Activated B cell treated with CpG ODN at 0.5 μM for 24 hours (primary cell): ENCODE measurements at regions of chrX and their contacts with region 1.

Region 1: GRCh38 chrX:10722851-10723250 is 102.5 kb upstream of the MID1 start:
- DNase-seq: no peak
- ATAC-seq: peak; percentile 61
- H3K4me3 Mint-ChIP-seq: no peak overlapping the region
- H3K27ac Mint-ChIP-seq: no peak overlapping the region
- H3K4me1 Mint-ChIP-seq: no peaks in the 10 kb centered on the region
- H3K27me3 Mint-ChIP-seq: no peaks in the 10 kb centered on the region
- CTCF ChIP-seq: no peak

Region 2: DNA sequence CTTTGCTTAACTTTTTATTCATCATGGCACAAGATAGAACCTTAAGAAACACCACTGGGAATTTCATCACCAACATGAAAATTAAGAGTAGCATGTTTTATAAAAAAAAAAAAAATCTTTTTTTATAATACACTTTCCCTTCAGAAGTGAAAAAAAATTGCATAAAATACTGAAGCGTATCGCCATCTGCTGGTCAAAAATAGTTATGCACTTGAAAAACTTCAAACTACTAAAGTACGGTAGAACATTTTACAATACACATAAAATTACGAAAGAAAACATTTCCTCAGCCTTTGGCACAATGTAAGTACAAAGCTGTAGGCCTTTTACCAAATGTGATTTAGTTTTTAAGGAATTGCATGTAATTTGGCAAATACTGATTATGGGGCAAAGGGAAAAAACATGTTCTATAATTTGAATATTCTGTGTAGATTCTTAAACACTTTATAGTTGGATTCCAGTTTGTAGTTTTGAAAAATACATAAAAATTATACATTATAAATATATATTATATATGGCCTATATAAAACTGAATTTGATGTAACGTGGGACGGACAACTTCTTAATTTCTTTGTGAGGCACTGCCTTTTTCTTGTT is 414.8 kb after region 1 on chrX:
- CTCF ChIA-PET with region 1: no interaction called
- POLR2A ChIA-PET with region 1: no interaction called
- intact Hi-C with region 1: loop called (anchors 2 kb)
- DNase-seq: no peak
- ATAC-seq: no peak
- H3K4me3 Mint-ChIP-seq: no peak overlapping the region
- H3K27ac Mint-ChIP-seq: no peak overlapping the region
- H3K4me1 Mint-ChIP-seq: no peaks in the 10 kb centered on the region
- H3K27me3 Mint-ChIP-seq: no peaks in the 10 kb centered on the region
- CTCF ChIP-seq: no peak

Region 3: GRCh38 chrX:12007881-12008280 is 1285.0 kb after region 1 on chrX:
- CTCF ChIA-PET with region 1: no interaction called
- POLR2A ChIA-PET with region 1: no interaction called
- intact Hi-C with region 1: no loop called
- DNase-seq: no peak
- ATAC-seq: no peak
- H3K4me3 Mint-ChIP-seq: no peak overlapping the region
- H3K27ac Mint-ChIP-seq: no peak overlapping the region
- H3K4me1 Mint-ChIP-seq: no peaks in the 10 kb centered on the region
- H3K27me3 Mint-ChIP-seq: no peaks in the 10 kb centered on the region
- CTCF ChIP-seq: no peak